Activated naive CD4-positive, alpha-beta T cell treated with anti-CD3 and anti-CD28 coated beads for 36 hours (primary cell): ENCODE measurements at regions of chr12 and their contacts with region 1.

Region 1: DNA sequence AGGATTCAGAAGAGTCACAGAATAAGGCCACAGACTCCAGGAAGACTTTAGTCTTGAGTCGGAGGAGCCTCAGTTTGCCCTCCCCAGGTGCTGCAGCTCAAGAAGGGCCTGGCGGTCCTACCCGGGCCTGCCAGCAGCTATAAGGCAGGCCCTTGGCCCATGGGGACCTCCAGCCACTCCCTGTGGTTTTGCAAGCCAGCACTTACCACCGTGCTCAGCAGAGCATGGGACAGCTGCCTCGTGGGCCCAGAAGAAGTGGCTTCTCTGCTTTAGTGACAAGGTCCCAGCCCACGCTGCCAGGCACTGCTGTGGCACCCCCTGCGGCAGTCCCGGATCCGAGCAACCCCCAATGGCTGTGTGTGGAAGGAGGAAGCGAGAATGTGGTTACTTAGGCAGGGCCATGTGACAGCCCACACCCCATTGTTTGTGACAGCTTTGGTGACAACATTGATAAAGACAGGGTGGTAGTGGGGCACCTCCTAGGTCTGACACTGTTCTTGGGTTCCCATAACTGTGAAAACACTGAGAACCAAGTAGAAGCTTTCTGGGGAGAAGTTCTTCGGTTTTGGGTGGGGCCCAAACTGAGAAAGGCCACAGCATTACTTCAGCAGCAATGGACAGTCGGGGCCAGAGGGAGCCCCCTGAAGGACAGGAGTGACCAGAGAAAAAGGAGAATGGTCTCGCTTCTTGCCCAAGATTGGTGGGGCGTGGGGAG is at the start of gene SELPLG:
- DNase-seq: peak; percentile 91
- H3K4me3 Mint-ChIP-seq: peak within 1 kb of the TSS; percentile 98
- H3K27ac Mint-ChIP-seq: peak within 1 kb of the TSS; percentile 100
- H3K4me1 Mint-ChIP-seq: peaks cover 53% of the 10 kb centered on the region
- H3K27me3 Mint-ChIP-seq: no peaks in the 10 kb centered on the region
- total RNA-seq, gene SELPLG: 19.9 to 21.9 TPM

Region 2: DNA sequence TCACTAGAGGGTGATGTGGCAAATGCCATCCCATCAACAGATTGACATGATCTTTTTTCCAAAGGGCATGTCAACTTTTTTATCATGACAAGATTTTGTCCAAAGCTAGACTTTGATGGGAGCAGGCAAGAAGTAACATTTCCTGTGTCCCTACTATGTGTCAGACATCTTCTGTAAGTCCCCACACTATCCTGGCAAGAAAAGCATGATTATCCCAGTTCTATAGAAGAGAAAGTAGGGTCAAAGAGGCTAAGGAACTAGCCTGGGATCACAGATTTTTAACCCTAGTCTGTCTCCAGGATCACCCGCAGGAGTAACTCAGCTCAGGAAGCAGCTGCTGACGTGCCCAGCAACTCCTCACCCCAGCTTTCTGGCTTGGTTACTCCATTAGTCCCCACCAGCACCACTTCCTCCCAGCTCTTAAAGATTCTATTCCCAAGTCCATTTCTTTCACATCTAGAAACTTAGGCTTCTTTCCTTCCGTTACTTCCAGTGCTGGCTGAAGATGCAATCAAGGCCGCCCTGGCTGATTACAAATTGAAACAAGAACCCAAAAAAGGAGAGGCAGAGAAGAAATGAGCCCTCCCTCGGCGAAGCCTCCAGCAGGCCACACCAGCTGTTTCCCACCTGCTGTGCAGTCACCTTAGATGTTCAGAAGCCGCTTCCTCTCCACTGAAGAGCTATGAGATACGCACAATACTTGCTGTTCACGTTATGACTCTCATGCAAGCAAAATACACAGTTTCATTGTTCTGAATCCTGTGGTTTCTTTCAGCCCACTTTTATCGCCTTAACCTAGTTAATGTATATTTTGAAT is 65.1 kb before region 1 on chr12:
- CTCF ChIA-PET with region 1: interaction called, 10 read pairs
- intact Hi-C with region 1: loop called (anchors 1 kb)
- DNase-seq: peak; percentile 89
- H3K4me3 Mint-ChIP-seq: peak overlapping the region; percentile 30
- H3K27ac Mint-ChIP-seq: peak overlapping the region; percentile 91
- H3K4me1 Mint-ChIP-seq: peaks cover 90% of the 10 kb centered on the region
- H3K27me3 Mint-ChIP-seq: no peaks in the 10 kb centered on the region

Region 3: GRCh38 chr12:108643941-108644810 is 10.5 kb after region 1 on chr12:
- CTCF ChIA-PET with region 1: interaction called, 17 read pairs
- intact Hi-C with region 1: no loop called
- DNase-seq: no peak
- H3K4me3 Mint-ChIP-seq: no peak overlapping the region
- H3K27ac Mint-ChIP-seq: no peak overlapping the region
- H3K4me1 Mint-ChIP-seq: peaks cover 35% of the 10 kb centered on the region
- H3K27me3 Mint-ChIP-seq: no peaks in the 10 kb centered on the region

Region 4: DNA sequence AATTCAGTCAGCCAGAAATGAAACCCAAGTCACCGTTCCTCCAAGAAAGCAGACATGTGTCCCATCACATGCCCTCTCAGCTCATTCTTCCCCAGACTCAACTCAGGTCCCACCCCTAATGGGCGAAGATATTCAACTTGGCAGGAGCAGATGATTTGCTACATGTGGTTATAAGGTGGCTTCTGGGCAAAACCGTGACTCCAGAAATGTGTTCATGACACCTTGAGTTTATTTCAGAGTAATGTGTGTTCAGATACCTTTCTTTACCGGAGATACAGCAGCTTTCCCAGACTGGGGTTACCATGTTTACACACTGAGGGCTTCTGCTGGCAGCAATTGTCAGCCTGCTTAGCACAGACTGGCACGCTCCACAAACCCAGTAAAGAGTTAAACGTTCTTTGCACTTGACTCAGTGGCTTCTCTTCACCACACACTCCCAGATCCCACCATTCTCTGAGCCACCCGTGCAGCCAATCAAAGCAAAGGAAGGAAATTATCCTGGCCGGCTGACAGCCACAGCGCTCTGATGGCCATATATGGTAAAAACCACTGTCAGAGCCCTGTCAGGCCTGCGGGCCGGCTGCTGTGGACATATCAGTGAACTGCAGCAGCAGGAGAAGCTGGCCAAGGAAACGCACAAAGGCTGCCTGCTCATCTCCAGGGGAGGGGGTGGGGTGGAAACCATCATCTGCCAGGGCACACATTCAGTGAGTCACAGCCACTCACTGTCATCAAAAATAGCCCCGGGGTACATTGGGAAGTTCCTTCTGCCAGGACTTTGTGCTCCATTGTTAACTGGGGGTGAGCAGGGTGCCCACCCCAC is 57.7 kb after region 1 on chr12:
- CTCF ChIA-PET with region 1: no interaction called
- intact Hi-C with region 1: loop called (anchors 1 kb)
- DNase-seq: peak; percentile 92
- H3K4me3 Mint-ChIP-seq: peak overlapping the region; percentile 55
- H3K27ac Mint-ChIP-seq: peak overlapping the region; percentile 80
- H3K4me1 Mint-ChIP-seq: peaks cover 77% of the 10 kb centered on the region
- H3K27me3 Mint-ChIP-seq: peaks cover 2% of the 10 kb centered on the region

Region 5: GRCh38 chr12:108803428-108804105 is 169.9 kb after region 1 on chr12:
- CTCF ChIA-PET with region 1: interaction called, 10 read pairs
- intact Hi-C with region 1: loop called (anchors 1 kb)
- DNase-seq: peak; percentile 83
- H3K4me3 Mint-ChIP-seq: no peak overlapping the region
- H3K27ac Mint-ChIP-seq: peak overlapping the region; percentile 76
- H3K4me1 Mint-ChIP-seq: peaks cover 7% of the 10 kb centered on the region
- H3K27me3 Mint-ChIP-seq: no peaks in the 10 kb centered on the region

Region 6: GRCh38 chr12:109052414-109053323 is 419.0 kb after region 1 on chr12 and contains the start of gene USP30:
- CTCF ChIA-PET with region 1: no interaction called
- intact Hi-C with region 1: loop called (anchors 2 kb)
- DNase-seq: peak; percentile 87
- H3K4me3 Mint-ChIP-seq: peak within 1 kb of the TSS; percentile 84
- H3K27ac Mint-ChIP-seq: peak within 1 kb of the TSS; percentile 96
- H3K4me1 Mint-ChIP-seq: peaks cover 8% of the 10 kb centered on the region
- H3K27me3 Mint-ChIP-seq: no peaks in the 10 kb centered on the region
- total RNA-seq, gene USP30: 11.0 to 11.5 TPM

Region 7: GRCh38 chr12:110583137-110584059 is 1949.7 kb after region 1 on chr12 and contains the start of gene PPTC7:
- CTCF ChIA-PET with region 1: no interaction called
- intact Hi-C with region 1: loop called (anchors 5 kb)
- DNase-seq: peak; percentile 99
- H3K4me3 Mint-ChIP-seq: peak within 1 kb of the TSS; percentile 90
- H3K27ac Mint-ChIP-seq: peak within 1 kb of the TSS; percentile 98
- H3K4me1 Mint-ChIP-seq: peaks cover 59% of the 10 kb centered on the region
- H3K27me3 Mint-ChIP-seq: no peaks in the 10 kb centered on the region
- total RNA-seq, gene PPTC7: 41.1 to 43.2 TPM